ENCODE measurements at regions of chr1 and their contacts with region 1.

Region 1: GRCh38 chr1:172002725-172003345 is 161.5 kb downstream of the DNM3 start:
- DNase-seq: peak; percentile 20
- H3K4me3 ChIP-seq: no peak overlapping the region
- H3K27ac ChIP-seq: no peak overlapping the region
- H3K4me1 ChIP-seq: peaks cover 5 to 10% of the 10 kb centered on the region in 2 experiments; a peak in 2 of 4 replicates
- H3K27me3 ChIP-seq: no peaks in the 10 kb centered on the region
- CTCF ChIP-seq: peak; percentile 93
- EP300 ChIP-seq: no peak
- RAD21 ChIP-seq: peak; percentile 90

Region 2: DNA sequence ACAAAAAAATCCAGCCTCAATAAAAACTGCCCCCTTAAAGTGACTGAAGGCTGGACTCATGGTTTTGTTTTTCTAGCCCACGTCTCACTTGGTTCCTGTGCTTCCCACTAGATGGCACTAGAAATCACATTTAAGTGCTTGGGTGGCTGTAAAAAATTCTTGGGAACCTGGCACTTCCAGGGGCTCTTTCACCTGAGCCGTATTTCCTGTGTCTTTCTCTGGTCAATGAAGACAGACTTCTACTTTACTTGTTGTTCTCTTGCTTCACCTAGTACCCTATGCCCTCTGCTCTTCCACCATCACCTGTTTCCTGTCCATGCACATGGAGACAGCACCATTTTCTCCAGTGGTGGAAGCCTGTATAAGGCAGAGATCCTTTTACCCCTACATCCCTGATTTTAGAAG is 201.3 kb before region 1 on chr1:
- CTCF ChIA-PET with region 1: interaction called, 40 read pairs
- POLR2A ChIA-PET with region 1: no interaction called
- DNase-seq: peak; percentile 60
- H3K4me3 ChIP-seq: no peak overlapping the region
- H3K27ac ChIP-seq: no peak overlapping the region
- H3K4me1 ChIP-seq: no peaks in the 10 kb centered on the region
- H3K27me3 ChIP-seq: no peaks in the 10 kb centered on the region
- CTCF ChIP-seq: peak; percentile 86
- EP300 ChIP-seq: no peak
- RAD21 ChIP-seq: peak; percentile 84

Region 3: DNA sequence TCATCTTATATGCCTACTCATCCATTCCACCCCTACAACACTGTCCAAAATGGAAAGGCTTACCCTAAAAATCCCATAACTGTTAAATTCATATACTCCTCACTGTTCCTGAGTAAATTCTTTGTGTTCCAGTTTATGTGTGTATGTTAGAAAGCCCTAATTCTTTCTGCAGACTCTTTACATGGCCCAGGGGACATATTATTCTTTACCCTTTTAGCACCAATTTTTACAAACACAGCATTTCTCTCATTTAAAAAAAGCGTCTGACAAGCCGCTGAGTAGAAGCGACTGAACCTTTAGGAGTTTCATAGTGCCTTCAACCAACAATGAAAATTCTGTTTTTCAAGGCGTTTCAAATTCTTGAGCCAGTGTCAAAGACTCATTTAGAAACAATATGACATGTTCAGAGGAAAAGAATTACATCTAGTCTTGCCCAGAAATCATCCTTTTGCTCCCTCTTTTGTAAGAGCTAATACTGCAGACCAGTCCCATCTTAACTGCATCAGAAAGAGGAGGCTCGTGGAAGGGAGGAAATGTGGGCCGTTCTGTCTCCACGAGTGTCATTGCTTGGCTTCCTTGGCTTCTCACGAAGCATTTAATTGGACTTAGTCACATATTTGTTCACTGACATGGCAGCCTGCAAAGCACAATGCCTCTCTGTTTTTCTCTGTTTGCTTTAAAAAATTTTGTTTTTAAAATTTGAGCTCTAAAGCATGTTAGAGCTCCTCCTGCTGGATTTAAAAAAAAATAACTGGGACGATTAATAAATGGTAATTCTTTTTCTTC is 396.3 kb after region 1 on chr1:
- CTCF ChIA-PET with region 1: interaction called, 42 read pairs
- POLR2A ChIA-PET with region 1: no interaction called
- DNase-seq: peak; percentile 29
- H3K4me3 ChIP-seq: peak overlapping the region in 1 of 2 experiments; percentile 1; a peak in 1 of 4 replicates
- H3K27ac ChIP-seq: peak overlapping the region; percentile 85 to 88
- H3K4me1 ChIP-seq: peaks cover 13 to 29% of the 10 kb centered on the region in 2 experiments
- H3K27me3 ChIP-seq: no peaks in the 10 kb centered on the region
- CTCF ChIP-seq: peak; percentile 82
- EP300 ChIP-seq: peak in 1 of 2 experiments; percentile 66; a peak in 1 of 4 replicates
- RAD21 ChIP-seq: peak; percentile 81

Region 4: DNA sequence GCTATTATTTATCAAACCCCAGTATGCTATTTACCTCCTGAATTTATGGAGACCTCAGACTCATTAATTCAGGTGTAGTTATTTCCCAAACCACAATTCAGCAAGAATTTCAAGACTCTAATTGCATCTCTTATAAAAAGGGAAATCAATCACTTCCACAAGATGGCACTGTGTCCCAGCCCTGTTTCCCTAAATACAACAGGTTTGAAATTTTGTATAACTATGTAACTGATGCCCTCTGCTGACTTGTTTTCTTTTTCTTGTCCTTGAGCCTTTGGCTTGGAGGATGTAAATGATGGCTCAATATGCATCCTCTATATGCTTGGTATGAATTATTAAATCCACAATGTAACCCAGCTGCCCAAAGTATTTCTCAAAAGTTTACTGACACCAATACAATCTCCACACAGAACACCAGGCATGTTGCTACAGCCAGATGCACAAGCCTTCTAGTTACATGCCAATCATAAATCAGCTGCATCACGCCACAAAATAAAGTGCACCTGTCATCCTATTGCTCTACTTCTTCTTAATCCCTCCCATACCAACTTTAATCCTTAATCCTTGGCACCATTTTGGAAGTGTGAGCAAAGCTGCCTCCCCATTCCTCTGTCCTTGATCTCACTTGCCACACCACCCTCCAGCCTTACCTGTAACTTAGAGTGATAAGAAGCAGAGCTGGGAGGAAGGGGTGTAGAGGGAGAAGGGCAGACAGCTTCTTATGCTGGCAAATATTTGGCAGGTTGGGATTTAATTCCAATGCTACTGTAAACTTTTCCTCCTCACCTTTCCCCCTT is 426.7 kb after region 1 on chr1:
- CTCF ChIA-PET with region 1: interaction called, 31 read pairs
- POLR2A ChIA-PET with region 1: no interaction called
- DNase-seq: peak; percentile 40
- H3K4me3 ChIP-seq: no peak overlapping the region
- H3K27ac ChIP-seq: no peak overlapping the region
- H3K4me1 ChIP-seq: no peaks in the 10 kb centered on the region
- H3K27me3 ChIP-seq: no peaks in the 10 kb centered on the region
- CTCF ChIP-seq: peak; percentile 87
- EP300 ChIP-seq: no peak
- RAD21 ChIP-seq: peak; percentile 79

Region 5: DNA sequence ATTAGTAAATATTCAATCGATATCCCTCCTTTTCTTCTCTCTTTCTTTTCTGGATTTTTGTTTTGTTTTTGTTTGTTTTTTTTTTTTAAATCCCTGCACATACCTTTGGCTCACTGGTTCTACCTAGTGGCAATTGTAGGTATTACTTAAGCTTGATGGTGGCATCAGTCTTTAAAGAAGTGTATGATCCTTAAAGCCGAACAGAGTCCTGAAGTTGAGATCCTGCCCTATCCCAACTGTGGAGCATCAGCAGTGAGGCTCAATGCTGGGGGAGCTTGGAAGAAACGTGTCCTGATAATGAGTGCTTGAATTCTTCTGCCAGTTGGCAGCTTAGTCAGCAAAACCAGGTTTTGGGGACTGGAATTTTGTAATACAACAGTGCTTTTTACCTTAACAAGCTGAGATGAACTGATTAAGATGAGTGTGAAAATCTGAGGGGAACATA is 716.9 kb after region 1 on chr1:
- CTCF ChIA-PET with region 1: interaction called, 11 read pairs
- POLR2A ChIA-PET with region 1: no interaction called
- DNase-seq: peak; percentile 57
- H3K4me3 ChIP-seq: no peak overlapping the region
- H3K27ac ChIP-seq: no peak overlapping the region
- H3K4me1 ChIP-seq: peaks cover 6 to 7% of the 10 kb centered on the region in 2 experiments; a peak in 3 of 4 replicates
- H3K27me3 ChIP-seq: no peaks in the 10 kb centered on the region
- CTCF ChIP-seq: peak; percentile 86
- EP300 ChIP-seq: no peak
- RAD21 ChIP-seq: peak; percentile 80

Region 6: GRCh38 chr1:172801771-172802322 is 799.0 kb after region 1 on chr1:
- CTCF ChIA-PET with region 1: no interaction called
- POLR2A ChIA-PET with region 1: no interaction called
- DNase-seq: no peak
- H3K4me3 ChIP-seq: no peak overlapping the region
- H3K27ac ChIP-seq: no peak overlapping the region
- H3K4me1 ChIP-seq: no peaks in the 10 kb centered on the region
- H3K27me3 ChIP-seq: no peaks in the 10 kb centered on the region
- CTCF ChIP-seq: no peak
- EP300 ChIP-seq: no peak
- RAD21 ChIP-seq: no peak